Naive thymus-derived CD4-positive, alpha-beta T cell (primary cell): ENCODE measurements at regions of chr1 and their contacts with region 1.

Region 1: GRCh38 chr1:187091666-187092065 is 262.9 kb downstream of the PLA2G4A start:
- DNase-seq: no peak
- ATAC-seq: no peak
- H3K4me3 ChIP-seq: no peak overlapping the region
- H3K4me3 Mint-ChIP-seq: peak overlapping the region in 8 of 10 donors; percentile 6 to 75 (median 54)
- H3K27ac ChIP-seq: no peak overlapping the region
- H3K27ac Mint-ChIP-seq: peak overlapping the region in 7 of 9 donors; percentile 6 to 84 (median 58)
- H3K4me1 ChIP-seq: no peaks in the 10 kb centered on the region
- H3K4me1 Mint-ChIP-seq: peaks cover 5 to 29% (median 10%) of the 10 kb centered on the region in 7 donors
- H3K27me3 ChIP-seq: no peaks in the 10 kb centered on the region
- H3K27me3 Mint-ChIP-seq: no peaks in the 10 kb centered on the region

Region 2: DNA sequence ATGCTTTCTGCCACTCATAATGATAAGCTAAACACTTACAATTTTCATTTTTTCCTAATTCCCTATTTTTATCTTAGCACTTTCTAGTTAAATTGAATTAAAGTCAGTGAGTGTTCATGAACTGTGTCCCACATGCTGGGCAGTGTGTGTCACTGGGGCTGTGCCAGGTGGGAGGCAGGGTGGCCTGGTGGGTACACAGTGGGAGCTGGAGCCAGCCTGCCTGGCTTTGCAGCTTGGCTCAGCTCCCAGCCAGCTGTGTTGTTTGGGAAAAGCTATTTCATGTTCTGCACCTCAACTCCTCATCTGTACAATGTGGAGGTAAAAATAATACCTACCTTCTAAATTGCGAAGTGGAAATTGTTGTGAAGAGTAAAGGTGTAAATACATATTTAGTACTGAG is 24.5 kb before region 1 on chr1:
- CTCF ChIA-PET with region 1: no interaction called
- POLR2A ChIA-PET with region 1: interaction called, 6 read pairs
- intact Hi-C with region 1: loop called in 1 of 2 experiments (anchors 1 kb)
- DNase-seq: no peak
- ATAC-seq: no peak
- H3K4me3 ChIP-seq: no peak overlapping the region
- H3K4me3 Mint-ChIP-seq: no peak overlapping the region
- H3K27ac ChIP-seq: no peak overlapping the region
- H3K27ac Mint-ChIP-seq: no peak overlapping the region
- H3K4me1 ChIP-seq: no peaks in the 10 kb centered on the region
- H3K4me1 Mint-ChIP-seq: peaks cover 0 to 3% (median 0%) of the 10 kb centered on the region in 7 donors
- H3K27me3 ChIP-seq: no peaks in the 10 kb centered on the region
- H3K27me3 Mint-ChIP-seq: peaks cover 0 to 4% (median 0%) of the 10 kb centered on the region in 5 donors